ENCODE measurements at regions of chr9 and their contacts with region 1.

Region 1: DNA sequence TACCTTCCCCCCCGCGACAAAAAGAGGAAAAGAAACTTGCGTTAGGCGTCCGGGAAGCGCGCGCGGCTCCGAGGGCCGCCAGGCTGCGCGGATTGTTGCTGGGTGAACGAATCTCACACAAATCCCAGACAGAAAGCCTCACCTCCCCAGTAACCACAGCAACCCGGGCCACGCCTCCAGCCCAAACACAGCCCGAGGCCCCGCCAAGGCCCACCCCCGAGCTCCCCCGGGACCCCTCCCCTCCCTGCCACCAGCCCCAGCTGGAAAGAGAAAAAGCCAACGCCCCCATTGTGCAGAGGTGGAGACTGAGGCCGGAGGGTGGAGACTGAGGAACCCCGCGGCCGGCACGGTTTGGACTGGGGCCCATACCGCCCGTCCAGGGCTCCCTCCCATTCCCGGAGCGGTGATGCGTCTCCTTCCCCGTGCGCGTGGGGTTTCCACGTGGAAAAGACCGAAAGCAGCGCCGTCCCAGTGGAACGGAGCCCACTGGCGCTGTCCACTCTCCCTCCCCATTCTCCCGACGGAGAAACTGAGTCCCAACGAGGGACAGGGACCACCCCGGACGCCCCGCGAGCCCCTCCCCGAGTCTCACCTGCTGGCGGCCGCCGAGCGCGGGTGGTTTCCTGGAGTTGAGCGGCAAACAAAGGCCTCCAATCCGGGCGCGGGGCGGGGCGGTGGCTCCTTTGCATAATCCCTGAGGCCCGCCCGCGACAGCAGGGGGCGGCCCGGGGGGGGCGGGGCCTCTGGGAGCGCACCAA is 10.2 kb upstream of the AKNA start:
- DNase-seq: peak; percentile 98
- ATAC-seq: peak; percentile 87
- H3K4me3 Mint-ChIP-seq: peak overlapping the region; percentile 93
- H3K27ac Mint-ChIP-seq: peak overlapping the region; percentile 89
- H3K4me1 Mint-ChIP-seq: peaks cover 46% of the 10 kb centered on the region
- H3K27me3 Mint-ChIP-seq: no peaks in the 10 kb centered on the region

Region 2: DNA sequence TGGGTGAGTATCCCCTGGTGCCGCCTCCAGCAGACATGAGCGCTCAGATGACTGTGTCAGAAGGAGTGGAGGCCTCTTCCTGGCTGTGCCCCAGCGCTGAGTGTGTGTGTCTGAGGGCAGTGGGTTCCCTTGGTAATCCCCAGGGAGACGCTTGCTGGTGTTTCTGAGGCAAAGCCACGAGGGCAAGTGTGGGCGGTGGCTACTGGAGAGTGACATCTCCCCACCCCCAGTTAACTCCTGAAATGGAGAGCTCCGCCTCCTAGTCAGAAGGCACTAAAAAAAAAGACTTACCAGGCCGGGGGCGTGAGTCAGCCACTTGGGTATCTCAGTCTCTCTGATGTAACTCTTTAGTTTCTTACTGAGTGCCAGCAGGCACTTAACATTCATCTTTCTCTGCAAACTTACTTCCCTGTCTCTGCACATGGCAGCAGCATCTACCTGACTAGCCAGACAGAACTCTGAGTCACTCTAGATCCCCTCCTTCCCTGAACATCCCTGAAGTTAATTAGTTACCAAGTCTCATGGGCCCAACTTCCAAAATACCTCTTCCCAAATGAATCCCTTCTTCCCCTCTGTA is 49.0 kb before region 1 on chr9:
- CTCF ChIA-PET with region 1: interaction called, 5 read pairs
- POLR2A ChIA-PET with region 1: no interaction called
- intact Hi-C with region 1: loop called (anchors 1 kb)
- DNase-seq: peak; percentile 97
- ATAC-seq: peak; percentile 88
- H3K4me3 Mint-ChIP-seq: peak overlapping the region; percentile 47
- H3K27ac Mint-ChIP-seq: peak overlapping the region; percentile 97
- H3K4me1 Mint-ChIP-seq: peaks cover 65% of the 10 kb centered on the region
- H3K27me3 Mint-ChIP-seq: no peaks in the 10 kb centered on the region

Region 3: DNA sequence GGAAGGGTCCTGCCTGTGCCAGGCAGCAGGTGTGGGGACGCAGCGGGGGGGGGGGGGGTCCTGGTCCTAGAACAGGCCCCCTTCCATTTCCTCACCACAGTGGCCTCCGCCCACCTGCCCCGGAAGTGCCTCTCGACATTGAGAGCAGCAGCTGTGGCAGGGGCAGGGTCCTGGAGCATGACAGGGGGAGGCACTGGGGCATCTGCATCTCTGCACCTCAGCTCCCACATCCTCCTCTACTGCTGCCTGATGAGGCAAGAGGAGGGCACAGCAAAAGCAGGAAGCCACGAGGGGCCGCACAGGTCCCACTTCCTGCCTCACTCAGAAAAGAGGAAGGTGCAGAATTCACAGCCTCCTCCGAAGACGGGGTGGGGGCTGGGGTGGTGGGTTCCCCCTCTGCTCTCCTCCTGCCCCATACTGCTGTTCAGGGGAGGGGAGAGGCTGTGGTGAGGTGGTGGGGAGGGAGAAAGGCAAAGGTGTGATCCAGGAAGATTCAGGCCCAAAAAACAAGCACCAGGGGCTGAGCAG is 25.0 kb before region 1 on chr9:
- CTCF ChIA-PET with region 1: interaction called, 4 read pairs
- POLR2A ChIA-PET with region 1: no interaction called
- intact Hi-C with region 1: loop called in 1 of 2 experiments (anchors 1 kb)
- DNase-seq: peak; percentile 91
- ATAC-seq: peak; percentile 85
- H3K4me3 Mint-ChIP-seq: peak overlapping the region; percentile 64
- H3K27ac Mint-ChIP-seq: peak overlapping the region; percentile 89
- H3K4me1 Mint-ChIP-seq: peaks cover 84% of the 10 kb centered on the region
- H3K27me3 Mint-ChIP-seq: no peaks in the 10 kb centered on the region

Region 4: GRCh38 chr9:114587385-114588202 is 189.6 kb after region 1 on chr9 and contains the start of gene ATP6V1G1:
- CTCF ChIA-PET with region 1: interaction called, 3 read pairs
- POLR2A ChIA-PET with region 1: interaction called, 4 read pairs
- intact Hi-C with region 1: loop called (anchors 1 to 2 kb)
- DNase-seq: peak; percentile 100
- ATAC-seq: peak; percentile 96
- H3K4me3 Mint-ChIP-seq: peak within 1 kb of the TSS; percentile 99
- H3K27ac Mint-ChIP-seq: peak within 1 kb of the TSS; percentile 100
- H3K4me1 Mint-ChIP-seq: peaks cover 44% of the 10 kb centered on the region
- H3K27me3 Mint-ChIP-seq: no peaks in the 10 kb centered on the region
- total RNA-seq, gene ATP6V1G1: 33.8 to 37.7 TPM

Region 5: DNA sequence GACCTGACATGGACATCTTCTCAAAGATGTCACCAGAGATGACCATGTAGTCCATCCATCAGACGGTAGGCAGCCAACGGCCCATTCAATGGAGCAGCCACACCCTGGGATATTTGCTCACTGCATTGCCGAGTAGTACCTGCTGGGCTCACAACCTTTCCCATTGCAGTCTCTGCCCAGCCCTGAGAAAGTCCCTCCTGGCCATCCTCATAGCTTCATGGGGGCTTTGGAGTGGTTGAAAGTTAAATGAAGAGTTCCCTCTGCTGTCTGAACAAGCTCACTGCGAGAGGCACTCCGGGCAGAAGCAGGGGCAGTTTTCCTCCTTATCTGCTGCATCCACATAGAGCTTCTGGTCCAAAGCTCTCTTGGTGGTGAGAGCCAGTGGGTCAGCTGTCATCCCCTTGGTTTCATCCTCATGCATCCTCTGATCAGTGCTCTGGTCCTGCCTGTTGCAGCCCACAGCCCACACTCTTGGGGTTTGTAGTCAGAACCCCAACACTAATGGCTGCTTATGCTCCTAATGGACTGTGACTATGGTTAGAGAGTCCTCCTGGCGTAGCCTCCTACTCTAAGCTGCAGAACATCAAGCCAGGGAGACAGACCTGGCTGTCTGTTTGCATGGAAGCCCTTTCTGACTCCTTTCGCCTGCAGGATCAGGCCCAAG is 509.0 kb after region 1 on chr9:
- CTCF ChIA-PET with region 1: no interaction called
- POLR2A ChIA-PET with region 1: no interaction called
- intact Hi-C with region 1: loop called in 1 of 2 experiments (anchors 10 kb)
- DNase-seq: peak; percentile 49
- ATAC-seq: peak; percentile 23
- H3K4me3 Mint-ChIP-seq: no peak overlapping the region
- H3K27ac Mint-ChIP-seq: peak overlapping the region; percentile 86
- H3K4me1 Mint-ChIP-seq: peaks cover 58% of the 10 kb centered on the region
- H3K27me3 Mint-ChIP-seq: no peaks in the 10 kb centered on the region